Activated CD4-positive, alpha-beta T cell treated with anti-CD3 and anti-CD28 coated beads for 36 hours (primary cell): ENCODE measurements at regions of chr10 and their contacts with region 1.

Region 1: GRCh38 chr10:5873515-5873995 is 16.1 kb downstream of the ANKRD16 start:
- DNase-seq: peak; percentile 77
- ATAC-seq: peak; percentile 95
- H3K4me3 Mint-ChIP-seq: no peak overlapping the region
- H3K27ac Mint-ChIP-seq: no peak overlapping the region
- H3K4me1 Mint-ChIP-seq: peaks cover 4% of the 10 kb centered on the region
- H3K27me3 Mint-ChIP-seq: no peaks in the 10 kb centered on the region

Region 2: DNA sequence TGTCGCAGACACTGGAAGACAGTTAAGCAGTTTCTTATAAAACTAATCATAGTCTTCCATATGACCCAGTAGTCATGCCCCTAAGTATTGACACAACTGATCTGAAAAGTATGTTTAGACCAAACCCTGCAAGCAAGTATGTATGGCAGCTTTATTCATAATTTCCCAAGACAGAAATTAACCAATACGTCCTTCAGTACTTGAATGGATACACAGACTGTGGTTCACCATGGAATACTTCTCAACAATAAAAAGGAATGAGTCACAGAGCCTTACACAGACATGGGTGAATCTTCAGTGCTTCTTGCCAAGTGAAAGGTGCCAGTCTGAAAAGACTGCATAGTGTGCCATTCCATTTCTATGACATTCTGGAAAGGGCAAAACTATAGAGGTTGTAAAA is 1097.7 kb before region 1 on chr10:
- CTCF ChIA-PET with region 1: no interaction called
- POLR2A ChIA-PET with region 1: no interaction called
- intact Hi-C with region 1: no loop called
- DNase-seq: no peak
- ATAC-seq: peak; percentile 76
- H3K4me3 Mint-ChIP-seq: no peak overlapping the region
- H3K27ac Mint-ChIP-seq: peak overlapping the region; percentile 89
- H3K4me1 Mint-ChIP-seq: peaks cover 12% of the 10 kb centered on the region
- H3K27me3 Mint-ChIP-seq: peaks cover 14% of the 10 kb centered on the region

Region 3: DNA sequence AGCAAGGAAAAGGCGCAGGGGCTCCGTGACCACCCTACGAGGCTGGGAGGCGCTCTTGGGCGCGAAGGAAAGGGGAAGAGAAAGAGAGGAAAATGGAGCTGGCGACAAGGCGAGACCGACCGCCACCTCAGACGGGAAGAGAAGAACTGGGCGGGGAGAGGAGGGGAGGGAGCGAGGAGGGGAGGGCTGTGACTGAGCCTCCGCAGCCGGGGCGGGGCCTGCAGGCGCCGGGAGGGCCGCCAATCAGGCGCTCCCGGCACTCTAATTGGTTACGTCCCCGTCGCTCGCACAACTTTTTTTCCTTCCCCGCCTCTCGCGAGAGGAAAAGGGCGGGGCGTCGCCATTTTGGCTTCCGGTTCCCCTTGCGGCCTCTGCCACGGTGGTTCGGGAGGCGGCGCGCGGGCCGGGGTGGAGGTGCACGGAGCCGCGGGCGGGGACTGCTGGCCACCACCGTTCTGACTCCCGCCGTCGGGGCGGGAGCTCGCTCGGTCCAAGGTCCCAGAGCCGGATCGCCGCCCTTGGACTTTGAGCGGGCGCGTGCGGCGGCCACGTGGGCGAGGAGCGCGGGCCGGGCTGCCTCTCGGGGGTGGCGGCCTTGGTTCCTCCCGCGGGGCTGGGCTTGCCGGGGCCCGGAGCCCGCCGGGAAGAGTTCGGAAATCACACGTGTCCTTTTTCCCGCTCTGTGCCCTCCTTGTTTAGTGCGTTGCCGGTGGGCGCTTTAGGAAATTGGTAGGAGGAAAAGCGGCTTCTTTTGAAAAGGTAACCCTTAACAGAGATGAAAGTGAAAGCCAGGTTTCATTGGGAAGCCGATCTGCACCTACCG is 60.1 kb before region 1 on chr10 and contains the start of gene GDI2:
- CTCF ChIA-PET with region 1: interaction called, 16 read pairs
- POLR2A ChIA-PET with region 1: interaction called, 6 read pairs
- intact Hi-C with region 1: loop called (anchors 1 kb)
- DNase-seq: peak; percentile 98
- ATAC-seq: peak; percentile 94
- H3K4me3 Mint-ChIP-seq: peak within 1 kb of the TSS; percentile 92
- H3K27ac Mint-ChIP-seq: peak within 1 kb of the TSS; percentile 98
- H3K4me1 Mint-ChIP-seq: peaks cover 60% of the 10 kb centered on the region
- H3K27me3 Mint-ChIP-seq: no peaks in the 10 kb centered on the region
- total RNA-seq, gene GDI2: 276 to 290 TPM

Region 4: GRCh38 chr10:5818894-5819293 is 54.7 kb before region 1 on chr10:
- CTCF ChIA-PET with region 1: interaction called, 6 read pairs
- POLR2A ChIA-PET with region 1: no interaction called
- intact Hi-C with region 1: loop called in 1 of 2 experiments (anchors 2 kb)
- DNase-seq: no peak
- ATAC-seq: no peak
- H3K4me3 Mint-ChIP-seq: no peak overlapping the region
- H3K27ac Mint-ChIP-seq: no peak overlapping the region
- H3K4me1 Mint-ChIP-seq: peaks cover 50% of the 10 kb centered on the region
- H3K27me3 Mint-ChIP-seq: no peaks in the 10 kb centered on the region

Region 5: DNA sequence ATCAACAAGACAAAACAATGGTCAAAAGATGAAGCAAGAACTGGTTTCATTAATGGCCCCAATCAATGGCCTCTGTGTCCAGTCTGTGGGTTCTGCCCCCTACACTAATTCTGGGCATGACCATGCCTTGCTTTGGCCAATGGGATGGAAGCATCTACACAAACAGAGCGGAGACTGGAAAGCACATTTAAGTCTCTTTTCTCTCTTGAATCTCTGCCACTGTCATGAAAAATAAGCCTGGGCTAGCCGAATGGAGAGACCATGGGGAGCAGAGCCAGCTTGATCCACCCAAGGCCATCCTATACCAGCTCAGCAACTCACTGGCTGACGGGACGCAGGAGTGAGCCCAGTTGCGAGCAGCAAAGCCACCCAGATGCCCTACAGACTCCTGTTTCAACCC is 14.7 kb before region 1 on chr10:
- CTCF ChIA-PET with region 1: interaction called, 11 read pairs
- POLR2A ChIA-PET with region 1: no interaction called
- intact Hi-C with region 1: no loop called
- DNase-seq: no peak
- ATAC-seq: no peak
- H3K4me3 Mint-ChIP-seq: no peak overlapping the region
- H3K27ac Mint-ChIP-seq: no peak overlapping the region
- H3K4me1 Mint-ChIP-seq: no peaks in the 10 kb centered on the region
- H3K27me3 Mint-ChIP-seq: no peaks in the 10 kb centered on the region

Region 6: GRCh38 chr10:5889624-5890451 is 16.3 kb after region 1 on chr10 and contains the starts of genes ANKRD16 and FBH1:
- CTCF ChIA-PET with region 1: interaction called, 11 read pairs
- POLR2A ChIA-PET with region 1: interaction called, 9 read pairs
- intact Hi-C with region 1: no loop called
- DNase-seq: peak; percentile 99
- ATAC-seq: peak; percentile 87
- H3K4me3 Mint-ChIP-seq: peak within 1 kb of the TSS; percentile 90
- H3K27ac Mint-ChIP-seq: peak within 1 kb of the TSS; percentile 84
- H3K4me1 Mint-ChIP-seq: peaks cover 53% of the 10 kb centered on the region
- H3K27me3 Mint-ChIP-seq: no peaks in the 10 kb centered on the region
- total RNA-seq, gene ANKRD16: 7.5 to 8.3 TPM
- total RNA-seq, gene FBH1: 53.3 to 56.2 TPM